Naive thymus-derived CD4-positive, alpha-beta T cell (primary cell): ENCODE measurements at regions of chr6 and their contacts with region 1.

Region 1: DNA sequence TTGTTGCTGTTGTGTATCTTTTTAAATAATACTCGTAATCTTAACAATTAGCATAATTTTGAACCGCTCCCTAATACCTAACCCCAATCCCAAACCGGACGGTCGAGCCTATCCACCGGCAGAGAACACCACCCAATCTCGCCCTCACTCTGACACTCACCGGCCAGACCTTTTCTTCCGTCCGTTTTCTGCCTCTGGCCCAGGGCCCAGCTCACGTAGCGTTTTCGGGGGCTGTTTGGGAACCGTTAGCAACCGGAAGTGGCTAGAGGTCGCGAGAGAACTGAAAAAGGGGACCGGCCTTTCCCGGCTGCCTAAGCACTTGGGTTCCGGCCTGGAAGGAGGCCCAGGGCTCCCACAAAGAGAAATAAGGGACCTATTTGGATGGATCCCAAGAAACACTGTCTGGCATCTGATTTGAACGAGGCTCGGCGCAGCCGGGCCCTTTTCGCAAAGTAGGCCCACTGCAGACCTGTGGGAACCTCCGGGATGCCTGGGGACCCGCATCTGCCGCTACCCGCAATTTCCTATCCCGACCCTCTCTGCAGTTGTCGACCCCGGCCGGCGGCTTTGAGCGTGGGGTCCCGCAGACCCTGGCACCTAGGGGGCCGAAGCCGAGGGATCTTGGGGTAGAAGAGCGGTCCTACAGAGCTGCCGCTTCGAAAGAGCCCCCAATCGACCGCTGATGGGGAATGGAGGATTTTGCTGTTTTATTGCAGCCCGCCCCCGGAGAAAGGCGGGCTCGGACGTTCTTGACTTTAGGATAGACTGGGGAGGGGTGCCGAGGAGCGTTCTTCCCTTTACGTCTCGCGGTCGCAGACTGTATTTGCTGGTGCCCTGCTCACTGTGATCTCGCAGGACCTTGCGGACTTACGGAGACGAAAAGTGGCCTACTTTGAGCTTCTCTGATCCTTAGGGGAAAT is 4.8 kb upstream of the ZKSCAN8 start:
- DNase-seq: peak; percentile 45 to 72 (median 56)
- ATAC-seq: peak; percentile 56
- H3K4me3 ChIP-seq: peak overlapping the region; percentile 89
- H3K4me3 Mint-ChIP-seq: peak overlapping the region; percentile 91 to 100 (median 94)
- H3K27ac ChIP-seq: peak overlapping the region; percentile 98
- H3K27ac Mint-ChIP-seq: peak overlapping the region; percentile 91 to 100 (median 97)
- H3K4me1 ChIP-seq: peaks cover 10 to 19% of the 10 kb centered on the region in 2 donors
- H3K4me1 Mint-ChIP-seq: peaks cover 31 to 78% (median 72%) of the 10 kb centered on the region in 7 donors
- H3K27me3 ChIP-seq: no peaks in the 10 kb centered on the region
- H3K27me3 Mint-ChIP-seq: no peaks in the 10 kb centered on the region

Region 2: GRCh38 chr6:28104392-28105244 is 32.2 kb before region 1 on chr6:
- CTCF ChIA-PET with region 1: interaction called, 4 read pairs
- POLR2A ChIA-PET with region 1: interaction called, 19 read pairs
- intact Hi-C with region 1: loop called (anchors 1 kb)
- DNase-seq: peak; percentile 68 to 82 (median 79)
- ATAC-seq: peak; percentile 99
- H3K4me3 ChIP-seq: peak overlapping the region; percentile 79
- H3K4me3 Mint-ChIP-seq: peak overlapping the region; percentile 86 to 95 (median 92)
- H3K27ac ChIP-seq: peak overlapping the region; percentile 76
- H3K27ac Mint-ChIP-seq: peak overlapping the region; percentile 76 to 96 (median 94)
- H3K4me1 ChIP-seq: peaks cover 0 to 7% of the 10 kb centered on the region in 2 donors
- H3K4me1 Mint-ChIP-seq: peaks cover 6 to 19% (median 9%) of the 10 kb centered on the region in 7 donors
- H3K27me3 ChIP-seq: no peaks in the 10 kb centered on the region
- H3K27me3 Mint-ChIP-seq: peaks cover 0 to 26% (median 16%) of the 10 kb centered on the region in 5 donors

Region 3: DNA sequence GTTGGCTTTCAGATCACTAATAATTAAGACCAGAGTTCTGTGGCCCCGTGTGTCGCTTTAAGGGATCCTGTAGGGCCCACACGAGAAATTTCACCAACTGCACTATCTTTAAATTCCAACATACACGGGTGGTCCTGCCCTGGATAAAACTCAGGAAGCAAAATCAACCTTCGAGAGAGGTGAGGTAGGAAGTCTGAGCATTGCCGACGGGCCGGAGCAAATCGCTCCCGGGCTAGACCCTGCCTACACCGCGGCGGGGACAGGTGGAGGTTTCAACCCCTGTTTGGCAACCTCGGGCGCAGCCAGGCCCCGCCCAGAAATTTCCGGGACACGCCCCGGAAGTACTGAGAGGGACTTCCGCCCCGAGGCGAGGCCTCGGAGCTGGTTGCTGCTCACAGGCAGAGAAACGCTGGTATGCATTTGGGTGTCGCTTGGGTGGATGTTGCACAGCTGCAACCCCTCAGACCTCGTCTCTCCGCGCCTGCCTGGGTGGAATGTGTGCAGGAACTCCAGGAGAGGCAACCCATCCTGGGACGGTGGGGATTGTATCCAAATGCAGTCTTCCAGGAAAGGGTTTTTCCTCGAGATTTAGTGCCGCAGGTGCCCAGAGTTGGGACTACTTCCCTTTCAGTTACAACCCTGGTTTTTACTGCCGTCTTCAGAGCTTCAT is 24.7 kb after region 1 on chr6:
- CTCF ChIA-PET with region 1: no interaction called
- POLR2A ChIA-PET with region 1: interaction called, 4 read pairs
- intact Hi-C with region 1: loop called in 1 of 2 experiments (anchors 1 kb)
- DNase-seq: peak; percentile 63 to 88 (median 80)
- ATAC-seq: peak; percentile 97
- H3K4me3 ChIP-seq: peak overlapping the region; percentile 54
- H3K4me3 Mint-ChIP-seq: peak overlapping the region; percentile 64 to 85 (median 79)
- H3K27ac ChIP-seq: peak overlapping the region; percentile 15
- H3K27ac Mint-ChIP-seq: peak overlapping the region in 8 of 9 donors; percentile 5 to 77 (median 46)
- H3K4me1 ChIP-seq: peaks cover 0 to 11% of the 10 kb centered on the region in 2 donors
- H3K4me1 Mint-ChIP-seq: peaks cover 8 to 17% (median 16%) of the 10 kb centered on the region in 7 donors
- H3K27me3 ChIP-seq: no peaks in the 10 kb centered on the region
- H3K27me3 Mint-ChIP-seq: peaks cover 0 to 8% (median 5%) of the 10 kb centered on the region in 5 donors

Region 4: DNA sequence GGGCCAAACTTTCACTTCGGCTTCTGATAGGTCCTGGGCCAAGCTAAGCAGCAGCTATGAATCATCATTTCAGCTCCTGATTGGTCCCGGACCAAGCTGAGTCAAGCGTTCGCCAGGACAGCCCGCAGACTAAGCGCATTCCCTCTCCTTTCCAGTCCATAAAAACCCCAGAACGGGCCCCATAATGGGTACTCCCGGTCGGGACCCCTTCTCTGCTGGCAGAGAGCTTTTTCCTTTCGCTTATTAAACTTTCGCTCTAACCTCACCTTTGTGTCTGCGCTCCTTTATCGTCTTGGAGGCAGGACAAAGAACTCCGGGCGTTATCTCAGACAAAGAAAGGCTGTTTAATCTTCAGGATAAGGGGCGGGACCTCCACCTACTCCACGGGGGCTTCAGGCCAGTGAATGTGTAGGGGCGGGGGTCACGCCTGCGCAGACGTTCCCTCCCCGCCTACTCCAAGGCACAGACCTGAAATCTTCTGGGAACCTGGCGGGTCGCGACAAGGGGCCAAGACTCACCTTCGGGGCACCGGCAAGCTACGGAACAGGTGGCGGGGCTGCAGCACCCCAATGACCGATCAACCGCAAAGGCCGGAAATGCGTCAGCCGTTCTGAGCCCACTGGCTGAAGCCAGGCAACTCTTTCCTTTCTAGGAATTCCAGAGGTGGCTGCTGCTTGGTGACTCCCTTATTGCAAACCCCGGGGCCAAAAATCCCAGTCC is 198.9 kb after region 1 on chr6 and contains the start of gene ZSCAN31:
- CTCF ChIA-PET with region 1: interaction called, 3 read pairs
- POLR2A ChIA-PET with region 1: interaction called, 11 read pairs
- intact Hi-C with region 1: loop called in 1 of 2 experiments (anchors 5 kb)
- DNase-seq: peak; percentile 43 to 87 (median 76)
- ATAC-seq: peak; percentile 95
- H3K4me3 ChIP-seq: peak within 1 kb of the TSS; percentile 97
- H3K4me3 Mint-ChIP-seq: peak within 1 kb of the TSS in 1 of 10 donors; percentile 58
- H3K27ac ChIP-seq: peak within 1 kb of the TSS; percentile 92
- H3K27ac Mint-ChIP-seq: peak within 1 kb of the TSS in 1 of 9 donors; percentile 47
- H3K4me1 ChIP-seq: peaks cover 9 to 10% of the 10 kb centered on the region in 2 donors
- H3K4me1 Mint-ChIP-seq: peaks cover 0 to 16% (median 9%) of the 10 kb centered on the region in 7 donors
- H3K27me3 ChIP-seq: no peaks in the 10 kb centered on the region
- H3K27me3 Mint-ChIP-seq: peaks cover 0 to 3% (median 0%) of the 10 kb centered on the region in 5 donors
- total RNA-seq, gene ZSCAN31: 0.93 to 2.4 (median 1.2) TPM

Region 5: DNA sequence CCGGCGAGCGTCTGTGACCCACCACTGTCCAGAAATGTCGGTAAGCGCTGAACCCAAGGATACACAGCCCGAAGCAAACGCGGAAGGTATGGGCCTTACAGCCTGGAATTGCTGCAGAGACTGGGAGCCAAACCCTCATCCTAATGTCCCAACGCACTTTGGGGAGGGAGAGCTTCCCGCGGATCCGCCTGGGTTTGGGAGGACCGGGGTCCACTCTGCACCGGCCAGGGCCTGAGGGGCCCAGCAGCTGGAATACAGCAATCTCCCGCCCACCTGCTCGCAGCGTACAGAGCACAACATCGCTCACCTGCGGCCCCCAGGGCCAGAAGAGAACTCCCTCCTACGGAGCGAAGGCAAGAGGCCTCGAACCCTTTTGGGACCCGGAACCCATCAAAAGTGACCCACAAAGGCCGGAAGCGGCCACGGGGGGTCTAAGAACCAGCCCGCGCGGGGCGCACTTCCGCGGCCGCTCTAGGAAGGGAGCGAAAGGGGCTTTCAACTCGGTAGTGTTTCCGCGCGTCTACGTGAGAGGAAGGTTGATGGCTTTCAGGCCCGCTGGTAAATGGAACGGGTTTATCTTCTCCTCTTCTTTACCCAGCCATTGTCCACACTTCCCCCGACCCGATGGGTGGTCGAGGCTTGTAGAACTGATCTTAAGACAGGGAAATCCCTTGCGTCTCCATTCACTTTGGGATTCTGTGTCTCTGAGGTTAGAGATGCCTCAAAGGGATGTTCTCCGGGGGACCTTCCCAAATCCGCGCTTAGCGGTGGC is 262.7 kb after region 1 on chr6 and contains the start of gene ZSCAN12:
- CTCF ChIA-PET with region 1: no interaction called
- POLR2A ChIA-PET with region 1: no interaction called
- intact Hi-C with region 1: loop called (anchors 1 kb)
- DNase-seq: peak; percentile 73 to 87 (median 81)
- ATAC-seq: peak; percentile 97
- H3K4me3 ChIP-seq: peak within 1 kb of the TSS; percentile 88
- H3K4me3 Mint-ChIP-seq: peak within 1 kb of the TSS; percentile 84 to 96 (median 92)
- H3K27ac ChIP-seq: peak within 1 kb of the TSS; percentile 74
- H3K27ac Mint-ChIP-seq: peak within 1 kb of the TSS; percentile 77 to 96 (median 93)
- H3K4me1 ChIP-seq: peaks cover 8 to 30% of the 10 kb centered on the region in 2 donors
- H3K4me1 Mint-ChIP-seq: peaks cover 30 to 54% (median 47%) of the 10 kb centered on the region in 7 donors
- H3K27me3 ChIP-seq: no peaks in the 10 kb centered on the region
- H3K27me3 Mint-ChIP-seq: peaks cover 0 to 33% (median 22%) of the 10 kb centered on the region in 5 donors
- total RNA-seq, gene ZSCAN12: 2.9 to 10.3 (median 7.4) TPM

Region 6: GRCh38 chr6:28648035-28648877 is 511.4 kb after region 1 on chr6:
- CTCF ChIA-PET with region 1: no interaction called
- POLR2A ChIA-PET with region 1: no interaction called
- intact Hi-C with region 1: no loop called
- DNase-seq: peak in 7 of 9 donors; percentile 16 to 63 (median 36)
- ATAC-seq: no peak
- H3K4me3 ChIP-seq: peak overlapping the region; percentile 14
- H3K4me3 Mint-ChIP-seq: peak overlapping the region; percentile 54 to 95 (median 86)
- H3K27ac ChIP-seq: no peak overlapping the region
- H3K27ac Mint-ChIP-seq: peak overlapping the region in 5 of 9 donors; percentile 0 to 83 (median 10)
- H3K4me1 ChIP-seq: peaks cover 0 to 7% of the 10 kb centered on the region in 2 donors
- H3K4me1 Mint-ChIP-seq: peaks cover 3 to 15% (median 13%) of the 10 kb centered on the region in 7 donors
- H3K27me3 ChIP-seq: peaks cover 0 to 15% of the 10 kb centered on the region in 2 donors
- H3K27me3 Mint-ChIP-seq: peaks cover 51 to 83% (median 56%) of the 10 kb centered on the region in 5 donors

Region 7: DNA sequence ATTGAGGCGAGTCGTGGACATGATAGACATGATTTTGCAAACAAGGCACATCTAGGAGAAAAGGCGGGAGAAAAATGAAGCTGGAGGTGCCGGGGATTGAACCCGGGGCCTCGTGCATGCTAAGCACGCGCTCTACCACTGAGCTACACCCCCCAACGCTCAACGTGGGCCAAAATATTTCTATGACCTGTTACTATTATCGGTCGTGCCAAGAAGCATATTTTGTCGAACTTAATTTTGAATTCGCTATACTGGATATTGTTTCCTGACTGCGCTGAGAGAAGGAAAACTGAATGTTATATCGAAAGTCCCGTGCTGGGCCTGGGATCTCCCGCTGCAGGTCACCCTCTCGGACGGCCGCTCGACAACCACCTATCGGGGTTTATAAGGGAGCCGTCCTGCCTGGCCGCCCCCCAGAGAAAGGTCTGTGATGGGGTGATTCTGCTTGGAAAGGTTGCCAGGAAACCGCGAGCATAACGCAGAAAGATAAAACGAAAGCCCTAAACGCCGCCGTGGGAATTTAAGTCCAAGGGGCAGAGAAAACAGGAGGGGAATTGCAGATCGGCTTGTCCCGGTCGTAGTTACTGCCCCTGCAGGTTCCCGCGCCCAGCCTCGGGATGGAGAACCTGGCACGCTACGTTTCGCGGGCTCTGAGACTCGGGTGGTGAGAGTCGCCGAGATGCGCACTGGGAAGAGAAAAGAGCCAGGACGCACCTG is 726.9 kb after region 1 on chr6:
- CTCF ChIA-PET with region 1: no interaction called
- POLR2A ChIA-PET with region 1: no interaction called
- intact Hi-C with region 1: loop called in 1 of 2 experiments (anchors 10 kb)
- DNase-seq: peak; percentile 60 to 93 (median 89)
- ATAC-seq: peak; percentile 64
- H3K4me3 ChIP-seq: peak overlapping the region; percentile 95
- H3K4me3 Mint-ChIP-seq: peak overlapping the region; percentile 90 to 98 (median 92)
- H3K27ac ChIP-seq: peak overlapping the region; percentile 75
- H3K27ac Mint-ChIP-seq: peak overlapping the region; percentile 89 to 100 (median 95)
- H3K4me1 ChIP-seq: peaks cover 11 to 18% of the 10 kb centered on the region in 2 donors
- H3K4me1 Mint-ChIP-seq: peaks cover 15 to 69% (median 53%) of the 10 kb centered on the region in 7 donors
- H3K27me3 ChIP-seq: no peaks in the 10 kb centered on the region
- H3K27me3 Mint-ChIP-seq: peaks cover 0 to 30% (median 4%) of the 10 kb centered on the region in 5 donors